ENCODE measurements at regions of chr10 and their contacts with region 1.

Region 1: DNA sequence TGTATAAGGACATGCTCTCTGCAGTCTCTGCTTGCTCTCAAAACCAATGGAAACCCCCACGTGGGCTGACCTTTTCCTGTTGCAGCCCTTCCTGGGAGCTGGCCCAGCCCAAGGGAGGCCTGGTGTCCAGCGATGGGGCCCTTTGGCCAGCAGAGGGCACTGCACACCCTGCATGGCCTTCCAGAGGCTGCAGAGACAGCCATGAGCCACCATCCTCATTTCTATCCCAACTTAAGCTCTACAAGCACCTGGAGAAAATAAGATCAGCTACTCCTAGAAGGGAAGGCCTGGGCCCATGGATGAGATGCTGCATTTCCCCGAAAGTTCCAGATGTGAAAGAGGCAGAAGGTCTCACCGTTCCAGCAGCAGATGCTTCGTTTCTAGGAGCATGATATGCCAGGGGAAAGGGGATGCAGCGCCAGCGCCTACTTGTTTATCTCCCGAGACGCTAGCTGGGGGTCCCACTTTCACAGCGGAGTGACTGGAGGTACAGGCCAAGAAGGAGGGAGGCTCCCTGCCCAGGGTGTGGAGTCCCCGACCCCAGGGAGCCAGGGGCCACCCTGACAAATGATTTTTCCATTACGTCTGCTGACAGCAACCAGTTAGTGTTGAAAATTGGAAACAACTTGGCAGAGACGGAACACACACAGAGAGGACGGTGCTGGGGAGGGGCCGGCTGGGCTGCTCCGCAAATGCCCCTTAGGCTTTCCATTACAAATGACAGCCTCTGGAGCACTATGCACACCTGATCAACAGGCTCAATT is 106.4 kb downstream of the ZRANB1 start:
- DNase-seq: peak; percentile 74
- H3K4me3 ChIP-seq: no peak overlapping the region
- H3K27ac ChIP-seq: peak overlapping the region; percentile 45
- H3K4me1 ChIP-seq: peaks cover 34% of the 10 kb centered on the region
- H3K27me3 ChIP-seq: no peaks in the 10 kb centered on the region
- CTCF ChIP-seq: peak; percentile 96

Region 2: GRCh38 chr10:124791378-124792348 is 256.6 kb before region 1 on chr10 and contains the start of gene EEF1AKMT2:
- CTCF ChIA-PET with region 1: no interaction called
- dilution Hi-C with region 1: no loop called
- in situ Hi-C with region 1: no loop called
- intact Hi-C with region 1: loop called (anchors 10 kb)
- DNase-seq: peak; percentile 82
- H3K4me3 ChIP-seq: peak within 1 kb of the TSS; percentile 94 to 97 (median 95)
- H3K27ac ChIP-seq: peak within 1 kb of the TSS; percentile 79
- H3K4me1 ChIP-seq: no peaks in the 10 kb centered on the region
- H3K27me3 ChIP-seq: no peaks in the 10 kb centered on the region
- CTCF ChIP-seq: peak in 1 of 2 donors; percentile 44
- total RNA-seq, gene EEF1AKMT2: 13.0 to 15.7 TPM

Region 3: DNA sequence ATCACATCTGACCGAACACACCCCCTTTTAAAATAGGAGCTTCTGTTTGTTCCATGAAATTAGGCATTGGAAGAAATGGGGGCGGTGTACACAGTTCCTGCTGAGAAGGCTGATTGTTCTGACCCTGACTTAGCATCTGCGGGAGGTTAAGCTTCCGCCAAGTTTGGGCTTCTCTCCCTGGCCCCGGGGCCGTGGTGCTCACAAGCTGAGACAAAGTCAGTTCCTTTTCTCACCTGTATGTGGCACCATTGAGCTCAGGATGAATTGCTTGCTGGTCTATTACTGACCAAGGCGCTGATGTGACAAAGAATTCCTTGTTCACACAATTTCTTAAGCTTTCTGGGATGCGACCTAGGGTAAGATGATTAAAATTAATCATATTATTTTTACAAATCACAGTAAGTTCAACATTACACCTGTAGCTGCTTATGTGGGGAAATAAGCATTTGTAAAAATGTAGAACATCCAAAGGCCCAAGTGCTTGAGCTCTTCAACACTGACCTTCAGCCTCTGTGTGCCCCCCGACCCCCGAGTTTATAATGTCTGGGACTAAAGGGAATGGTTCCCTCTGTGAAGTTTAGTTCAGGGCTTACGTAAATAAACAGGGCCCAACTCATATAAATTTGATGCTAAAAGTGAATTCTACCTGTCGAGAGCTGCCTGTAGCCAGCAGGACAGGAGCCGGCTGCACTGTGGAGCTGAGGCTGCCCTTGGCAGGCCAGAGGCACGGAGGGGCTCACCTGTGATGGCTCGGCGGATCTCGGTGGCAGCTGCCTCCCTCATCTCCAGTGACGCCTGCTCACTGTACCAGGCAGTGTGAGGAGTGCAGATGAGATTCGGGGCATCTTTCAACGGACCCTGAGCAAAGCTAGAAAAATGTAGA is 55.6 kb before region 1 on chr10:
- CTCF ChIA-PET with region 1: no interaction called
- dilution Hi-C with region 1: loop called (anchors 5 kb)
- in situ Hi-C with region 1: no loop called
- intact Hi-C with region 1: no loop called
- DNase-seq: peak; percentile 46
- H3K4me3 ChIP-seq: no peak overlapping the region
- H3K27ac ChIP-seq: no peak overlapping the region
- H3K4me1 ChIP-seq: peaks cover 4% of the 10 kb centered on the region
- H3K27me3 ChIP-seq: no peaks in the 10 kb centered on the region
- CTCF ChIP-seq: peak; percentile 48 to 51

Region 4: GRCh38 chr10:125144693-125145623 is 96.7 kb after region 1 on chr10:
- CTCF ChIA-PET with region 1: no interaction called
- dilution Hi-C with region 1: loop called (anchors 5 kb)
- in situ Hi-C with region 1: no loop called
- intact Hi-C with region 1: loop called (anchors 1 kb)
- DNase-seq: peak; percentile 65
- H3K4me3 ChIP-seq: no peak overlapping the region
- H3K27ac ChIP-seq: peak overlapping the region; percentile 34
- H3K4me1 ChIP-seq: peaks cover 46% of the 10 kb centered on the region
- H3K27me3 ChIP-seq: no peaks in the 10 kb centered on the region
- CTCF ChIP-seq: peak; percentile 35 to 70

Region 5: GRCh38 chr10:125160856-125161706 is 112.8 kb after region 1 on chr10:
- CTCF ChIA-PET with region 1: no interaction called
- dilution Hi-C with region 1: no loop called
- in situ Hi-C with region 1: no loop called
- intact Hi-C with region 1: no loop called
- DNase-seq: peak; percentile 80
- H3K4me3 ChIP-seq: peak overlapping the region; percentile 64 to 86 (median 70)
- H3K27ac ChIP-seq: peak overlapping the region; percentile 80
- H3K4me1 ChIP-seq: peaks cover 20% of the 10 kb centered on the region
- H3K27me3 ChIP-seq: no peaks in the 10 kb centered on the region
- CTCF ChIP-seq: peak; percentile 16 to 64

Region 6: GRCh38 chr10:125343118-125343925 is 295.0 kb after region 1 on chr10:
- CTCF ChIA-PET with region 1: no interaction called
- dilution Hi-C with region 1: no loop called
- in situ Hi-C with region 1: no loop called
- intact Hi-C with region 1: loop called (anchors 5 kb)
- DNase-seq: peak; percentile 9
- H3K4me3 ChIP-seq: no peak overlapping the region
- H3K27ac ChIP-seq: no peak overlapping the region
- H3K4me1 ChIP-seq: no peaks in the 10 kb centered on the region
- H3K27me3 ChIP-seq: no peaks in the 10 kb centered on the region
- CTCF ChIP-seq: peak; percentile 60 to 62

Region 7: DNA sequence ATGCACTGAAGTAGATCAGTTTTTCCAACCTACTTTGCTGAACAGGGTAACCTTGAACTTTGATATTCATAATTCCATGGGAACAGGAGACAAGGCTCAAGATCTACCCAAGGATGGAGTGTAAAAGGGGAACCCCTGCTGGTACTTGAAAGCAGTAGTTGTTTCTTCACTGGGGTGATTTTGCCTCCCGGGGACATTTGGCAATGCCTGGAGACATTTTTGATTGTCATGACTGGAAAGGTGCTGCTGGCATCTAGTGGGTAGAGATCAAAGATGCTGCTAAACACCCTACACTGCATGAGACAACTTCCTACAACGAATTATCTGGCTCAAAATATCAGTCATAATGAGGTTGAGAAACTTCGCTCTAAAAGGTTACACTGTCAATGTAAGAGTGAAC is 326.9 kb after region 1 on chr10:
- CTCF ChIA-PET with region 1: no interaction called
- dilution Hi-C with region 1: no loop called
- in situ Hi-C with region 1: no loop called
- intact Hi-C with region 1: loop called (anchors 10 kb)
- DNase-seq: peak; percentile 46
- H3K4me3 ChIP-seq: no peak overlapping the region
- H3K27ac ChIP-seq: no peak overlapping the region
- H3K4me1 ChIP-seq: no peaks in the 10 kb centered on the region
- H3K27me3 ChIP-seq: no peaks in the 10 kb centered on the region
- CTCF ChIP-seq: peak; percentile 7 to 41

Region 8: GRCh38 chr10:125629763-125630376 is 581.6 kb after region 1 on chr10:
- CTCF ChIA-PET with region 1: no interaction called
- dilution Hi-C with region 1: no loop called
- in situ Hi-C with region 1: no loop called
- intact Hi-C with region 1: loop called (anchors 2 kb)
- DNase-seq: peak; percentile 46
- H3K4me3 ChIP-seq: no peak overlapping the region
- H3K27ac ChIP-seq: no peak overlapping the region
- H3K4me1 ChIP-seq: no peaks in the 10 kb centered on the region
- H3K27me3 ChIP-seq: no peaks in the 10 kb centered on the region
- CTCF ChIP-seq: peak; percentile 56 to 78

Measured in mammary epithelial cell (primary cell).